ENCODE measurements at regions of chr6 and their contacts with region 1.

Region 1: DNA sequence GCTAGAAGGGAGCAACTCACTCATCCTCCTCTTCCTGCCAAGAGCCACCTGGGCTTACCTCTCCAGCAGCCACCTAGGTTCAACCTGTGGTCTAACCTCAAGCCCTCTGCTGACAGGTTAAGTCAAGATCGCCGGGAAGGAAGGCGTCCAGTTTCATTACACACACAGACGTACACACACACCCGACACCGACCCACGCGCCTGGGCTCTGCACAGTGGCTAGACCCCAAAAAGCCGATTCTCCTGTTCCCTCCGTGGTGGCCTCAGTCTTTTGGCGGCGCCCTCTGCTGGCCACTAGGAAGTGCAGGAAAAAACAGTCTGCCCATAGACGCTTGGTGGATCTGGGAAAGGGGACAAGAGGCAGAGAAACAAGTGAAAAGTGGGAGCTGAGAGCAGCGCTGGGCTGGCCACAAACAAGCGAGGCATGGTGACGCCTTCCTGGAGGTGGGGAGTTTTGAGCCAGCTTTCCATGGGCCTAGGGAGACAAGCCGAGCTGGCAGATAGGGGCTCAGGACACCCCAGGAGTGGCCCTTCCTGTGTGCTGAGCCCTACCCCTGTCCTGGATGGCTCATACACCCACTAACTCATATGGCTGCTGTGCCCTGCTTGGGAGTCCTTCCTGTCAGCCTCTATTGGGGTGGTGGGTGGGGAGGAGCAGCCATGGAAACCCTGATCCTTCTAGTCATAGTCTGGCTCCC is 52.7 kb downstream of the MRPL14 start:
- DNase-seq: peak in 1 of 2 experiments; percentile 81
- H3K4me3 ChIP-seq: peak overlapping the region in 1 of 4 experiments; percentile 56; a peak in 1 of 8 replicates
- H3K27ac ChIP-seq: no peak overlapping the region
- H3K4me1 ChIP-seq: peaks cover 9 to 32% (median 26%) of the 10 kb centered on the region in 4 experiments
- H3K27me3 ChIP-seq: peaks cover 0 to 9% (median 2%) of the 10 kb centered on the region in 4 experiments; a peak in 4 of 7 replicates
- CTCF ChIP-seq: peak in 2 of 3 experiments; percentile 88 to 91; a peak in 3 of 4 replicates
- EP300 ChIP-seq: no peak
- POLR2A ChIP-seq: no peak
- RAD21 ChIP-seq: peak; percentile 67 to 77

Region 2: DNA sequence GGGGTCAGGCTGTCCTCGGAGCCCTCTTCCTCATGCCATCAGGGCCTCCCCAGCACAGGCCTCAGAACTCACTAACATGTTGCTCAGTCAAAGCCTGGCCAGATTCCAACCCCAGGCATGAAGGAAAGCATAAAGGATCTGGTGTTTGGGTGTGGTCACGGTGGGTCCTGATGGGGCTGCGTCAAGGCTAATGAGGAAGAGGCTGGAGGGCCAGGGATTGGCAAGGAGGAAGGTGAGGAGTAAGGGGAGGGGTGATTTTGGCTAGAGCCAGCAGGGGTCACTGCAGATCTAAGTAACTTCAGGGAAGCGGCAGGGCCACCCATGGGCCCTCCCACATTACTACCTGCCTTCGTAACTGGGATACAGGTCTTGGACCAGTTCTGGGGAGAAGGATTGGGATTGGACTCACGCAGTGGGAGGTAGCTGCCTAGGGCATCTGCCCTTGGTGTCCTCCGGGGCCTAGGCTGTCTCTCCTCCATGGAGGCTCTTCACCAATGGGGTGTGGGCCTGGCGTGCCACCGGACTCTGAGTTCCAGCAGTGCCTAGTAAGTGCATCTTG is 350.8 kb before region 1 on chr6:
- CTCF ChIA-PET with region 1: interaction called, 11 read pairs
- POLR2A ChIA-PET with region 1: no interaction called
- DNase-seq: peak; percentile 49 to 85
- H3K4me3 ChIP-seq: no peak overlapping the region
- H3K27ac ChIP-seq: no peak overlapping the region
- H3K4me1 ChIP-seq: peaks cover 0 to 8% (median 0%) of the 10 kb centered on the region in 4 experiments; a peak in 4 of 7 replicates
- H3K27me3 ChIP-seq: no peaks in the 10 kb centered on the region
- CTCF ChIP-seq: peak; percentile 77 to 82 (median 81)
- EP300 ChIP-seq: no peak
- POLR2A ChIP-seq: no peak
- RAD21 ChIP-seq: peak; percentile 89

Region 3: DNA sequence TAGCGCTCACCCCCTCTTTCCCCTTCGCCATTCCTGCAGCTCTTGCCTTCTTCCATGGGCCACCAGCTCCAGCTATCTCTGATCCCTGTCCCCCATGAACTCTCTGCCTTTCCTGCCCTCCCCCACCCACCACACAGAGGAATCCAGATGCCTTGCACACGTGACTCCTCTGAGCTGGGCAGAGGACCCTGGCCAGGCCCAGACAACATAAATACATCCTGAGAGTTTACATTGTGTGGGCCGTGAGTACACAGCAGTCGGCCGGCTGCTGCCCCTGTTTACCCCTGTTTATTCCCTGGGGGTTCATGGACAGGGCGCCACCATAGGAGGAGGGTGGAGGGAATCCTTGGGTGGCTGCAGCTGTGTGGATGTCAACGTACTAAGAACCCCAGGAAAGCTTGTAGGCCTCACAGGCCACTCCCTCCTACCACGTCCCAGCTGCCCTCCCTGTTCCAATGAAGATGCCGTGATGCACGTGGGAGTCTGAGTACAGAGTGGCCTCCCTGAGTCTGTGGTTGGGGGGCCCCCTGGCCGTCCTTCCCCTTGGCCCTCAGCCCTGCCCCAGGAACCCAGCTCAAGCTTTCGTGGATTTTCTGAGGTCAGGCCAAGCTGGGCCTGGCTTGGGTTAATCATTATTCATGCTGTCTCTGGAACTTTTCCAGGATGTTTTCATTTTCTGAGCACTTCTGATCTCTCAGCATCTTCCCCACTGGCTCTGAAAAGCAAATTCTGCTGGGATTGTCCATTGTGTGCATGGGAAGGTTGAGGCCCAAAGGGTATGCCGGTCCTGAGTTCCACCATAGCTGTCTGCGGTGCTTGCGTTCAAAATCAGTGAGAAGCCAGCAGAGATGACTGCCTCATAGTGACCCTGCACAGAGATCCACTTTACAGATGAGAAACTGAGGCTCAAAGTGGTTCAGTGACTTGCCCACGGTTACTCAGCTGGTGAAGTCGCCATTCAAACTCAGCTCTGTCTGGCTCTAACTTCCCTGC is 83.7 kb before region 1 on chr6:
- CTCF ChIA-PET with region 1: interaction called, 331 read pairs
- POLR2A ChIA-PET with region 1: interaction called, 3 read pairs
- DNase-seq: no peak
- H3K4me3 ChIP-seq: no peak overlapping the region
- H3K27ac ChIP-seq: no peak overlapping the region
- H3K4me1 ChIP-seq: peaks cover 0 to 16% (median 8%) of the 10 kb centered on the region in 4 experiments; a peak in 6 of 7 replicates
- H3K27me3 ChIP-seq: no peaks in the 10 kb centered on the region
- CTCF ChIP-seq: no peak
- EP300 ChIP-seq: no peak
- POLR2A ChIP-seq: no peak
- RAD21 ChIP-seq: no peak

Region 4: DNA sequence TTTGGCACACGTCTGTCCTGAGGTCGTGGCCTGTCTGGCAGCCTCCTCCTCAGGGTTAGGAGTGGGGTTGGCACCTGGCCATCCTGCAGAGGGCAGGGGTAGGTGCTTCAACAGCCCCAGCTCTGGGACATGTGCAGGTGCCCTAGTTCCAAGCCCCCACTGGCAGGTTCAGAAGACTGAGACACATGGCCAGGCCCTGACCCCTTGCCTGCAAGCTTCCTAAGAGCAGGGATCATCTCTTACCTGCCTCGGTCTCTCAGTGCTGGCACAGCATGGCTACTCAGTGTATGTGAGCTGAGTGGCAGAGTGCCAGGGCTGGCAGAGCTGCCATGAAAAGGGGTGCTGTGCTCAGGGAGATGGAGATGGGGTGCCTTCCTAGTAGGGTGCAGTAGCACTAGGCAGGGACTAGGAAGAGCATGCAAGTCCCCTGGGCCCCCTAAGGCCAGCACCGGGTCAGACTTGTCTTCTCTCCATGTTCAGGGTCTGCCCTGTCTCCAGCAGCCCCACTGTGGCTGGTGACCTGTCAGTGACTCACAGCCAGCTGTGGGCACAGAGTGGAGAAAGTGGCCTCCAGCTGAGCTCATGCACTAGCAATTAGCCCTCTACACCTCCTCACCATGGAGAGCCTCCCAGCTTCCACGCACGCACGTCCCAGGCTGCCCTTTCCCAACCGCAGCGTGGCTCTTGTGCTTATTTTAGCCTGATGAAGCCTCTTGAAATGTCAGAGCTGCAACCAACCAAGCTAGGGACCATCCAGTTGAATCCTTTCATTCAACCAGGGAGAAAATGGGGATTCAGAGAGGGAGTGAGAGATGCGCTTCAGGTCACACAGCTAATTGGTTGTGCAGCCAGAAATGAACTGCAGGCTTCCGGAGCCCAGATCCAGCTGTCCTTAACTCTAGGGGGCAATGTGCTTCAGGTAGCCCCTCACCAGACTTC is 63.9 kb before region 1 on chr6:
- CTCF ChIA-PET with region 1: interaction called, 331 read pairs
- POLR2A ChIA-PET with region 1: interaction called, 6 read pairs
- DNase-seq: no peak
- H3K4me3 ChIP-seq: no peak overlapping the region
- H3K27ac ChIP-seq: no peak overlapping the region
- H3K4me1 ChIP-seq: peaks cover 0 to 10% (median under 1%) of the 10 kb centered on the region in 4 experiments; a peak in 6 of 7 replicates
- H3K27me3 ChIP-seq: peaks cover 0 to 3% (median 0%) of the 10 kb centered on the region in 4 experiments; a peak in 2 of 7 replicates
- CTCF ChIP-seq: peak in 2 of 3 experiments; percentile 4 to 12; a peak in 1 of 4 replicates
- EP300 ChIP-seq: no peak
- POLR2A ChIP-seq: no peak
- RAD21 ChIP-seq: no peak; a peak in 1 of 4 replicates

Region 5: GRCh38 chr6:44041461-44042260 is 32.9 kb before region 1 on chr6:
- CTCF ChIA-PET with region 1: interaction called, 8 read pairs
- POLR2A ChIA-PET with region 1: interaction called, 14 read pairs
- DNase-seq: peak in 1 of 2 experiments; percentile 68
- H3K4me3 ChIP-seq: no peak overlapping the region
- H3K27ac ChIP-seq: 0 out of 2 replicates have a peak overlapping the region, but pooled peaks have one; percentile 21
- H3K4me1 ChIP-seq: peaks cover 9 to 27% (median 15%) of the 10 kb centered on the region in 4 experiments
- H3K27me3 ChIP-seq: no peaks in the 10 kb centered on the region
- CTCF ChIP-seq: no peak
- EP300 ChIP-seq: no peak
- POLR2A ChIP-seq: no peak
- RAD21 ChIP-seq: no peak

Region 6: GRCh38 chr6:44064089-44064947 is 10.3 kb before region 1 on chr6:
- CTCF ChIA-PET with region 1: interaction called, 60 read pairs
- POLR2A ChIA-PET with region 1: interaction called, 5 read pairs
- DNase-seq: no peak
- H3K4me3 ChIP-seq: no peak overlapping the region
- H3K27ac ChIP-seq: no peak overlapping the region
- H3K4me1 ChIP-seq: peaks cover 0 to 16% (median 9%) of the 10 kb centered on the region in 4 experiments; a peak in 5 of 7 replicates
- H3K27me3 ChIP-seq: no peaks in the 10 kb centered on the region; a peak in 1 of 7 replicates
- CTCF ChIP-seq: no peak
- EP300 ChIP-seq: no peak
- POLR2A ChIP-seq: no peak
- RAD21 ChIP-seq: no peak

Region 7: GRCh38 chr6:44179072-44179536 is 104.5 kb after region 1 on chr6:
- CTCF ChIA-PET with region 1: no interaction called
- POLR2A ChIA-PET with region 1: no interaction called
- DNase-seq: no peak
- H3K4me3 ChIP-seq: no peak overlapping the region
- H3K27ac ChIP-seq: no peak overlapping the region
- H3K4me1 ChIP-seq: peaks cover 2 to 15% (median 3%) of the 10 kb centered on the region in 4 experiments; a peak in 5 of 7 replicates
- H3K27me3 ChIP-seq: no peaks in the 10 kb centered on the region
- CTCF ChIP-seq: no peak
- EP300 ChIP-seq: no peak
- POLR2A ChIP-seq: no peak
- RAD21 ChIP-seq: no peak

Measured in H1 (cell line).